Activated T-helper 1 cell treated with anti-CD3 and anti-CD28 coated beads, Interleukin-12 subunit alpha, Interleukin-12 subunit beta, Interleukin-2, Interleukin-4 antibody, amounts not matched to agents 30 ng/mL and 10 ng/mL and 1 ng/mL, durations not matched to agents 14 hours and 24 hours and 36 hours (primary cell): ENCODE measurements at regions of chr2 and their contacts with region 1.

Region 1: DNA sequence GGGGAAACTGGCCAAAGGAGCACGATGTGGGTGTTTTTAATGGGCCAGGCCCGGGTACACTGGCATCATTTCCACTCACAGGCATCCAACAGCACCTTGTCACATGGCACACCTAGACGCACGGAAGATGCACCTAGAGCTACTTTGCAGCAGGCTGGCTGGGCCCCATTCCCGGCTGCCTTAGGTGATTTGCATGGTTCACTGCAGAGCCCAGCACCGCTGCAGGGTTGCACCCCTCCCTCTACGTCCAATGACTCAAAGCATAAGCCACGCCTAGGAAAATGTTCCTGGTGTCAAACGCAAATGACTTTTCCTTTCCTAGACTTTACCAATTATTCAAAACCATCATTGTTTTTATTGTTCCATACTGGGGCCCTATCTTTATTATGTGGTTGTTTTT is 222.9 kb downstream of the EIPR1 start:
- DNase-seq: no peak
- H3K4me3 Mint-ChIP-seq: no peak overlapping the region
- H3K27ac Mint-ChIP-seq: no peak overlapping the region
- H3K4me1 Mint-ChIP-seq: peaks cover 4% of the 10 kb centered on the region
- H3K27me3 Mint-ChIP-seq: no peaks in the 10 kb centered on the region

Region 2: DNA sequence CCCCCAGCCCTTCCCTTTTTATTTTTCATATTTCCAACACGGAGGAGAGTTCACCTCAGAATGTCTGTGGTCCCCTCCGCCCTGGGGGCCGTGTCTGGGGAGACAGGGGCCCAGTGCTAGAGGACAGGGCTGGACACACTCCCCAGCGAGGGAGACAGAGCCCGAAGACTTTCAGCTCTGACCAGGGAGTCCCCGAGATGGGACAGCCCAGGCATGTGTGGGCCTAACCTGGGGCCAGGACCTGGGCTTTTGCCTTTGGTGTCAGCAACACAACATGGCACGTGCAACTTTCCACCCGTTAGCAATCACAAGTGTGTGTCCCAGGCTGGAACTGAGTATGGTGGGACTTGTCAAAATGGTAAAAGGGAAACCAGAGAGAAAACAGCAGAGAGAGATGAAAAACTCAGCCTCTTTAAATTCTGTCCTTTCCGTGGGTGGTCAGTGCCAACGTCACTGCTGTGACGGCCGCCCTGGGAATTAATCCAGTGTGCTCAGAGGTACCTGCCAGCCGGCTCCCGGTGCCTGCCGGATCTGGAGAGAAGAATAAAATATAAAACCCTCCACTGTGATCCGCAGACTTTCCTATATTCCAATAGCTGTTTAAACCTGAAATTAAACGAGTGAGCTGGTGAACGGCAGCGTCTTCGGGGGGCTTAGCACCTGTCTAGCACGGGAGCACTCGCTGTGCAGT is 22.9 kb before region 1 on chr2:
- intact Hi-C with region 1: loop called (anchors 1 kb)
- DNase-seq: no peak
- H3K4me3 Mint-ChIP-seq: no peak overlapping the region
- H3K27ac Mint-ChIP-seq: no peak overlapping the region
- H3K4me1 Mint-ChIP-seq: no peaks in the 10 kb centered on the region
- H3K27me3 Mint-ChIP-seq: no peaks in the 10 kb centered on the region

Region 3: DNA sequence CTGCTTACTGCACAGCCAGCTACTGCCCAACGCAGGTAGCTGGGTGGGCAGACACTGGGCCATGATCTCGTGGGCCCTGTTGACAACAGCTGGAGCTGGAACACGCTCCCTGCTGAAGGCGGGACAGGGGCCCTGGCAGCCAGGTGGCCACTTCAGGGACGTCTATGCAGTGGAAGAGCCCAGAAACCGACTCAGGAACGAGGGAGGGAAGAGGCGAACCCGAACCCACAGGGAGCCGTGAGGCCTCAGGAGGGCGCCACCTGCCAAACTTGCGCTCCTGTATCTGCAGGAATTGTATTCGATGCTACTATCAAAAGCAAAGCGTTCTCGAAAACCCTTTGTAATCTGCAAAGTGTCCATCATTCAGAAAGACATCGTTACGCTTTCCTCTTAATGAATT is 24.5 kb after region 1 on chr2:
- intact Hi-C with region 1: no loop called
- DNase-seq: no peak
- H3K4me3 Mint-ChIP-seq: no peak overlapping the region
- H3K27ac Mint-ChIP-seq: no peak overlapping the region
- H3K4me1 Mint-ChIP-seq: no peaks in the 10 kb centered on the region
- H3K27me3 Mint-ChIP-seq: no peaks in the 10 kb centered on the region